ENCODE measurements at regions of chr16 and their contacts with region 1.

Region 1: GRCh38 chr16:67841764-67842508 is at the start of gene THAP11:
- DNase-seq: peak; percentile 92
- H3K4me3 Mint-ChIP-seq: peak within 1 kb of the TSS; percentile 93
- H3K27ac Mint-ChIP-seq: peak within 1 kb of the TSS; percentile 96
- H3K4me1 Mint-ChIP-seq: peaks cover 33% of the 10 kb centered on the region
- H3K27me3 Mint-ChIP-seq: peaks cover 5% of the 10 kb centered on the region
- total RNA-seq, gene THAP11: 43.0 and 49.5 TPM in 2 replicates

Region 2: DNA sequence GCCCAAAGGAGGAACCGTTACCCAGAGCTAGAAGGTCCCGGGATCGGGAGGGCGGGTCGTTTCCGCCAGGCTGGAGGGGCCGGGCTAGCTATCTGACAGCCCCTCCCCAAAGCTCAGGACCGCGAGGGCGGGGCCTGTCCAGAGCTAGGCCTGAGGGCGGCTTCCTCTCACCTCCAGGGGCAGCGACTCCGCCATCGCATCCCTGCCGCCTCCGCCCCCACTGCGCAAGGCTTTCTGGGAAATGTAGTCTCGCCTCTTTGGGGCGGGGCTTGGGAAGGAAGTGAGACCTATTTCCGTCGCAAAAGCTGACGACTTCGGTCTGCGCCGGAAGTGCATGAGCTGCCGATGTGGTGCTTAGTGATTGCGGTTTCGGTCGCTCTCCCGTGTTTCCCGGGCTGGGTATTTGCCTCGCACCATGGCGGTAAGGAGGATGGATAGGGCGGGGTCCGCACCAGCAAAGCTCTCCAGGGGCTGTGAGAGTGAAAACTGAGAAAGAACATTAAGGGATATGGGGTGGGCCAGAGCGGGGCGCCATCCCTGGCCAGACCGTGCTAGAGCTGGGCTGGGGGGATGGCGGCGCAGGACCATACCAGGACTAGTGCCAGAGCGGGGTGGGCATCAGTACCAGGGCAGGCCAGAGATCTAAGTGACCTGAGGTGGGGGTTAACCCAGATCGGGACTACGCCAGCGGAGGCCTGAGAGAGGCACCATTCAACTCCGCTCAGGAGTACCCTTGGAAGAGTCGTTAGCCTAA is 615.0 kb before region 1 on chr16 and contains the start of gene TMEM208:
- intact Hi-C with region 1: loop called (anchors 1 kb)
- DNase-seq: peak; percentile 99
- H3K4me3 Mint-ChIP-seq: peak within 1 kb of the TSS; percentile 98
- H3K27ac Mint-ChIP-seq: peak within 1 kb of the TSS; percentile 94
- H3K4me1 Mint-ChIP-seq: peaks cover 43% of the 10 kb centered on the region
- H3K27me3 Mint-ChIP-seq: no peaks in the 10 kb centered on the region
- total RNA-seq, gene TMEM208: 68.5 and 72.4 TPM in 2 replicates

Region 3: GRCh38 chr16:67561824-67562525 is 280.0 kb before region 1 on chr16:
- intact Hi-C with region 1: loop called (anchors 1 kb)
- DNase-seq: peak; percentile 98
- H3K4me3 Mint-ChIP-seq: peak overlapping the region; percentile 88
- H3K27ac Mint-ChIP-seq: peak overlapping the region; percentile 94
- H3K4me1 Mint-ChIP-seq: peaks cover 40% of the 10 kb centered on the region
- H3K27me3 Mint-ChIP-seq: no peaks in the 10 kb centered on the region

Region 4: GRCh38 chr16:67806428-67807147 is 35.3 kb before region 1 on chr16 and contains the starts of genes RANBP10 and TSNAXIP1:
- intact Hi-C with region 1: loop called (anchors 1 kb)
- DNase-seq: peak; percentile 96
- H3K4me3 Mint-ChIP-seq: peak within 1 kb of the TSS; percentile 90
- H3K27ac Mint-ChIP-seq: peak within 1 kb of the TSS; percentile 86
- H3K4me1 Mint-ChIP-seq: peaks cover 35% of the 10 kb centered on the region
- H3K27me3 Mint-ChIP-seq: peaks cover 3% of the 10 kb centered on the region
- total RNA-seq, gene RANBP10: 23.0 and 25.7 TPM in 2 replicates
- total RNA-seq, gene TSNAXIP1: 0.52 and 0.83 TPM in 2 replicates

Region 5: GRCh38 chr16:67865316-67865715 is 23.4 kb after region 1 on chr16:
- intact Hi-C with region 1: no loop called
- DNase-seq: no peak
- H3K4me3 Mint-ChIP-seq: no peak overlapping the region
- H3K27ac Mint-ChIP-seq: peak overlapping the region; percentile 73
- H3K4me1 Mint-ChIP-seq: peaks cover 15% of the 10 kb centered on the region
- H3K27me3 Mint-ChIP-seq: no peaks in the 10 kb centered on the region

Region 6: DNA sequence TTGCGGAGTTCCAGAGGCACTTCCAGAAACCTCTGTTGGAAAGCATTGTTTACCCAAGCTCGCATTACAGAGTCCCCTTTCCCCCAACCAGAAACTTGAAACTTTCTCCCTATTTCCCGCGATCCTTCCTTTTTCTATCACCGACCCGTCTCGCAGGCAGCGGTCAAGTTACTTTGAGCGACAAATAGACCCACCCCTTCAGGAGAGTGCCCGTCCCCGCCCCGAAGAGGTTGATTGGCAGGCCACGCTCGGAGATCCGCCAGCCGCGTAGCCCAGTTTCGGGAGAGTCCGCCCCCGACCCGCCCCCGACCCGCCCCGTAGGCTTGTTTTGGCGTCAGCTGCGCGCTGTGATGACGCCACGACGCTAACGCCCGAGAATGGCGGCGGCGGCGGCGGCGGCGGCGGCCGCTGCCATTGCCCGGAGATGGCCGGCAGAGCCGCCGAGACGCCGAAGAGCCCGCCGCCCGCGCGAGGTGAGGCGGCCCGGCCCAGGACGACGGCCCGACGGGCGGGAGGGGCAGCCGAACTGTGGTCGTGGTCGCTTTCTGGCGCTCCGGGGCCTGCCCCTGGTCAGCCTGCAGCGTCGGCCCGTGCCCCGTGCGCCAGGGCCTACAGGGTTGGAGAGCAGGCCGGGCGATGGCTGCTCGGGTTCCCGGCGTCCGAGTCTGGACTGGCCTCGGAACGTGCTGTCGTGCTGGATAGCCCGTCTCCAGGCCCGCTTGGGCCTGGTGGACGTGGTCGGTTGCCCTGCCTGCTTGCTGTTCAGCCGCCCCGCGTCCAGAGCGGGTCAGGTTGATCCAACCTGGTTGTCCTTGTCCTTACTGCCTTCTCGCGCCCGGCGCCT is 51.2 kb after region 1 on chr16 and contains the start of gene PSKH1:
- intact Hi-C with region 1: loop called (anchors 1 kb)
- DNase-seq: peak; percentile 88
- H3K4me3 Mint-ChIP-seq: peak within 1 kb of the TSS; percentile 98
- H3K27ac Mint-ChIP-seq: peak within 1 kb of the TSS; percentile 96
- H3K4me1 Mint-ChIP-seq: peaks cover 20% of the 10 kb centered on the region
- H3K27me3 Mint-ChIP-seq: no peaks in the 10 kb centered on the region
- total RNA-seq, gene PSKH1: 17.8 TPM in 2 replicates

Region 7: DNA sequence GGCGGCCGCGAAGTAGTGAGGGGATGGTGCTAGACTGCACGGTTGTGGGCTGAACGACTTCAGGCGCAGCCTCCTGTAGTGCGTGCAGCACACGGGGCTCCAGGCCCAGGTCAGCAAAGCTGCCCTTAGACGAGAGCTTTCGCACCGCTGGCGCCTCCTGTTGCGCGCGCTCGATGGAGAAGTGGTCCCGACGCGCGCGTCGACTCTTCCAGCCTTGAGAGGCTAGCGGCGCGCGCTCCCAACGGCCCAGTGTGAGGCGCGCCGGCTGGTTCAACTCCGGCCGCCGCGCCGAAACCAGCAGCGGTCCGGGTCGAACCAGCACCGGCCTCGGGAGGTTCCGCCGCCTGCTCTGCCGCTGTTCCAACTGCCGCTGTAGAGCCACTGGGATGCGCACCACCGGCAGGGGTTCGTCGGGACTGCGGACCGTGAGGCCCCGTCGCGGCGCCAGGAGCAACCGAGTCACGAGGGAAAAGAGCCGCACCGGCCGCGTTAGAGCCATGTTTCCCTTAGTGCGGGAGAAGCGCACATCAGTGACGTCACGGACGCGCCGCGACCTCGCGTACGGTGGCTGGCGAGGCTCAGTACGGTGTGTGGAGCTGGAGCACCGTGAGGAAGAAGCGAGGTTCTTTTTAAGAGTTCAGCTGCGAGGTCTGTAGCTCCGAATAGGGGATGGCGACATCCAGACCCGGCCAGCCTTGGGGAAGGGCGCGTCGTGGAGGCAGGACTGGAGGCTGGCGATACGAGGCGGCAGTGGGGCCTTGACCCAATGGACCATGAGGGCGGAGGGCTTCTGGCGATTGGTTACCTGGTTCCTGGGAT is 181.0 kb after region 1 on chr16 and contains the starts of genes DDX28 and DUS2:
- intact Hi-C with region 1: loop called (anchors 1 kb)
- DNase-seq: peak; percentile 93
- H3K4me3 Mint-ChIP-seq: peak within 1 kb of the TSS; percentile 100
- H3K27ac Mint-ChIP-seq: peak within 1 kb of the TSS; percentile 96
- H3K4me1 Mint-ChIP-seq: peaks cover 26% of the 10 kb centered on the region
- H3K27me3 Mint-ChIP-seq: no peaks in the 10 kb centered on the region
- total RNA-seq, gene DDX28: 28.2 and 28.4 TPM in 2 replicates
- total RNA-seq, gene DUS2: 34.7 and 37.2 TPM in 2 replicates

Region 8: DNA sequence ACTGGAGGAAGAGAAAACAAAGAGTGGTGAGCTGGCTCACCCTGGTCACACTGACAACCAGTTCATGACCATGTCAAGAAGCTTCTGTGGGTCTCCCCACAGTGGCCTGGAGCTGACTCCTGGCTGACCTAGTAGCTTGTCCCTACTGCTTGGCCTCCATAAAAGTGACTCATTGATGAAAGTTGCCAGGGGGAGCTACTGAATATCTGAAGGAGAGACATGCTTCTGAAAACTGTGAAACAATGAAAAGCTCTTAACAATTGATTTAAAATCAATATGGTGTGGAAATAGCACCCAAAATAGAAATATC is 584.4 kb after region 1 on chr16:
- intact Hi-C with region 1: no loop called
- DNase-seq: no peak
- H3K4me3 Mint-ChIP-seq: no peak overlapping the region
- H3K27ac Mint-ChIP-seq: no peak overlapping the region
- H3K4me1 Mint-ChIP-seq: no peaks in the 10 kb centered on the region
- H3K27me3 Mint-ChIP-seq: peaks cover 5% of the 10 kb centered on the region

Measured in activated T-helper 1 cell treated with anti-CD3 and anti-CD28 coated beads, Interleukin-12 subunit alpha, Interleukin-12 subunit beta, Interleukin-2, Interleukin-4 antibody, amounts not matched to agents 30 ng/mL and 10 ng/mL and 1 ng/mL, durations not matched to agents 14 hours and 24 hours and 36 hours (primary cell).